Activated T-helper 1 cell treated with anti-CD3 and anti-CD28 coated beads, Interleukin-12 subunit alpha, Interleukin-12 subunit beta, Interleukin-2, Interleukin-4 antibody, amounts not matched to agents 30 ng/mL and 10 ng/mL and 1 ng/mL, durations not matched to agents 14 hours and 24 hours and 36 hours (primary cell): ENCODE measurements at regions of chr1 and their contacts with region 1.

Region 1: GRCh38 chr1:54886724-54887664 is at the start of gene DHCR24:
- DNase-seq: peak; percentile 85
- H3K4me3 Mint-ChIP-seq: peak within 1 kb of the TSS; percentile 96
- H3K27ac Mint-ChIP-seq: peak within 1 kb of the TSS; percentile 87
- H3K4me1 Mint-ChIP-seq: peaks cover 56% of the 10 kb centered on the region
- H3K27me3 Mint-ChIP-seq: peaks cover 10% of the 10 kb centered on the region
- total RNA-seq, gene DHCR24: 206 and 211 TPM in 2 replicates

Region 2: GRCh38 chr1:54800899-54801759 is 85.9 kb before region 1 on chr1 and contains the start of gene TTC22:
- intact Hi-C with region 1: loop called (anchors 2 kb)
- DNase-seq: peak; percentile 56
- H3K4me3 Mint-ChIP-seq: peak within 1 kb of the TSS; percentile 85
- H3K27ac Mint-ChIP-seq: peak within 1 kb of the TSS; percentile 80
- H3K4me1 Mint-ChIP-seq: peaks cover 65% of the 10 kb centered on the region
- H3K27me3 Mint-ChIP-seq: no peaks in the 10 kb centered on the region
- total RNA-seq, gene TTC22: 2.2 and 2.3 TPM in 2 replicates

Region 3: GRCh38 chr1:54950369-54951163 is 63.6 kb after region 1 on chr1:
- intact Hi-C with region 1: loop called (anchors 2 kb)
- DNase-seq: peak; percentile 38
- H3K4me3 Mint-ChIP-seq: no peak overlapping the region
- H3K27ac Mint-ChIP-seq: no peak overlapping the region
- H3K4me1 Mint-ChIP-seq: peaks cover 17% of the 10 kb centered on the region
- H3K27me3 Mint-ChIP-seq: peaks cover 9% of the 10 kb centered on the region